Heart right ventricle (tissue), 16 donors: ENCODE measurements at regions of chr12 and their contacts with region 1.

Region 1: DNA sequence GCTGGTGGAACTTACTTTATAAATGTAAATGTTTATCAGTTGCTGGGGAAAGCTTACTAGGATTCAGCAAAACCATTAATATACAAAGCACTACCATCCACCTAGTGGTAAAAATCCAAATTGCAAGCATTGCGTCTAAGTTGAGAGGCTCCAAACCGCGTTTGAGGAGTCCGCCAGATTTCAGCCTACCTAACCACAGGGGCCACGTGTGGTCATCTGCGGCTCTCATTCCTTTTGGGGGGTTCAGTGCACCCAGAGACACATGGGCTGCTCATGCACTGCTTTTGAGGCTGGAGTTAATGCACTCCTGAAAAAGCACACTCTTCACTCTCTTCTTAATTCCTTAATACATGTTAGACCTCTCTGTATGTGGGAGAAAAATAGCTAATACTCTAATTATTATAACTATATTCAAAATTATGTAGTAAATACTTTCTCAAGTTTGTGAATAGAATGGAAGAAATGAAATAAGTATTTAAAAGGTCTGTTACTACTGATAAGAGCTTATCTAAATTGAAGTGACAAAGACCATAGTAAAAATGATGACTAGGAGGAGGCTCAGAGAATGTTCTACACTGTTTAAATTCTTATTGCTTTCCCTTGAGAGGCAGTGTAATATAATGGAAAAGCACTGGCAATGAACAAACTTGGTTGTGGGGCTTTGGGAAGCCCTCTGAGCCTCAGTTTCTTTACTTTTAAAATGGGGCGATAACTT is 41.4 kb upstream of the MANSC4 start:
- DNase-seq: peak in 1 of 2 donors; percentile 50
- ATAC-seq: peak in 7 of 8 donors; percentile 45 to 79 (median 54)
- H3K4me3 ChIP-seq: no peak overlapping the region
- H3K27ac ChIP-seq: no peak overlapping the region
- H3K4me1 ChIP-seq: peaks cover 0 to 14% (median 0%) of the 10 kb centered on the region in 9 donors
- H3K27me3 ChIP-seq: peaks cover 0 to 7% (median 0%) of the 10 kb centered on the region in 7 donors
- CTCF ChIP-seq: peak; percentile 57 to 84 (median 77)

Region 2: GRCh38 chr12:27940756-27941402 is 119.5 kb after region 1 on chr12:
- intact Hi-C with region 1: loop called in 1 of 10 experiments (anchors 10 kb)
- DNase-seq: peak; percentile 61 to 63
- ATAC-seq: peak in 6 of 8 donors; percentile 34 to 85 (median 68)
- H3K4me3 ChIP-seq: no peak overlapping the region
- H3K27ac ChIP-seq: no peak overlapping the region
- H3K4me1 ChIP-seq: no peaks in the 10 kb centered on the region
- H3K27me3 ChIP-seq: no peaks in the 10 kb centered on the region
- CTCF ChIP-seq: peak; percentile 37 to 85 (median 83)